Activated CD4-positive, alpha-beta memory T cell treated with anti-CD3 and anti-CD28 coated beads for 36 hours (primary cell): ENCODE measurements at regions of chrX and their contacts with region 1.

Region 1: DNA sequence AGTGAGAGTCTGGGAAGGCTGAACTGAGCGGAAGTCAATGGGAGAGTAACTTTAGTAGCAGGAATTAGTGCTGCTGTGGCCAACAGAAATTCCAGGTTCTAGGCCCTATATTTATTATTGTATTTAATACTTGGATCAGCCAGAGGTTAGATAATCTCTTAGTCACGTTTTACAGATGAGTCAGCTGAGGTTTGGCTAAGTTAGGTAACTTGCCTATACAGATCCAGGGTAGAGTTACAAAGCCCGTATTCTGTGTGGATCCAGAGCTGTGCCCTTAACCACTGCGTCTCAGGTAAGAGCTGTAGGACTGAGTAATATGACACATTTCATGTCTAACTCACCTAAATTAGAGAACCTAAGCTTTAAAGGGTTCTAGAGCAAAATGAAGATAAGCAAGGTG is 20.5 kb downstream of the PSMD10 start:
- DNase-seq: no peak
- H3K4me3 Mint-ChIP-seq: no peak overlapping the region
- H3K27ac Mint-ChIP-seq: no peak overlapping the region
- H3K4me1 Mint-ChIP-seq: peaks cover 3% of the 10 kb centered on the region
- H3K27me3 Mint-ChIP-seq: no peaks in the 10 kb centered on the region

Region 2: GRCh38 chrX:107537815-107538214 is 533.1 kb before region 1 on chrX:
- CTCF ChIA-PET with region 1: no interaction called
- POLR2A ChIA-PET with region 1: no interaction called
- intact Hi-C with region 1: no loop called
- DNase-seq: peak; percentile 50
- H3K4me3 Mint-ChIP-seq: no peak overlapping the region
- H3K27ac Mint-ChIP-seq: no peak overlapping the region
- H3K4me1 Mint-ChIP-seq: no peaks in the 10 kb centered on the region
- H3K27me3 Mint-ChIP-seq: peaks cover 8% of the 10 kb centered on the region

Region 3: GRCh38 chrX:107654872-107655761 is 415.8 kb before region 1 on chrX:
- CTCF ChIA-PET with region 1: interaction called, 3 read pairs
- POLR2A ChIA-PET with region 1: no interaction called
- intact Hi-C with region 1: loop called (anchors 5 kb)
- DNase-seq: peak; percentile 73
- H3K4me3 Mint-ChIP-seq: no peak overlapping the region
- H3K27ac Mint-ChIP-seq: no peak overlapping the region
- H3K4me1 Mint-ChIP-seq: peaks cover 13% of the 10 kb centered on the region
- H3K27me3 Mint-ChIP-seq: no peaks in the 10 kb centered on the region

Region 4: DNA sequence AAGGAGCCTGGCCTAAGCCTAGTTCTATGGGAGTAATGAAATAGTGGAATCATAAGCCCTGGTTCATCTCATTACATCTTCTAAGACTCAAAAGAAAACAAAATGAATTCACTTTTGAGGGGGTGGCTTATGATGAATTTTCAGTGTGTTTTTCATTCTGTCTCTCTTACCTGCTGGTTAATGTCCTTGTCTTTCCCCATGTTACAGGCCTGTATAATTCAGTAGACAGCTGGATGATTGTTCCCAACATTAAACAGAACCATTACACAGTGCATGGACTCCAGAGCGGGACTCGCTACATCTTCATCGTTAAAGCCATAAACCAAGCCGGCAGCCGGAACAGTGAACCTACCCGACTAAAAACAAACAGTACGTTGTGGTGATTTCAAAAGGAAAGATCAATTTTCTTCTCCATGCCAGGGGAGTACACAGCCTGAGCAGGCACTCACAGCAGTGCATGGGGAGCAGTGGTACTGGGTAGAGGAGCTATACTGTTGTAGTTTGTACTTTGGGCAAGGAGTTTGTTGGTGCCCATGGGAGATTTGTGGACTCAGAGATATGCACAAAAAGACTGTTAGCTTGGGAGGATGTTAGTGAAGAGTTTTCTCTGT is 146.7 kb before region 1 on chrX:
- CTCF ChIA-PET with region 1: no interaction called
- POLR2A ChIA-PET with region 1: no interaction called
- intact Hi-C with region 1: loop called (anchors 5 kb)
- DNase-seq: no peak
- H3K4me3 Mint-ChIP-seq: no peak overlapping the region
- H3K27ac Mint-ChIP-seq: no peak overlapping the region
- H3K4me1 Mint-ChIP-seq: no peaks in the 10 kb centered on the region
- H3K27me3 Mint-ChIP-seq: no peaks in the 10 kb centered on the region

Region 5: GRCh38 chrX:108053218-108053617 is 17.7 kb before region 1 on chrX:
- CTCF ChIA-PET with region 1: no interaction called
- POLR2A ChIA-PET with region 1: no interaction called
- intact Hi-C with region 1: loop called (anchors 2 kb)
- DNase-seq: no peak
- H3K4me3 Mint-ChIP-seq: no peak overlapping the region
- H3K27ac Mint-ChIP-seq: no peak overlapping the region
- H3K4me1 Mint-ChIP-seq: peaks cover 7% of the 10 kb centered on the region
- H3K27me3 Mint-ChIP-seq: no peaks in the 10 kb centered on the region

Region 6: GRCh38 chrX:108312938-108313337 is 242.0 kb after region 1 on chrX:
- CTCF ChIA-PET with region 1: no interaction called
- POLR2A ChIA-PET with region 1: no interaction called
- intact Hi-C with region 1: no loop called
- DNase-seq: no peak
- H3K4me3 Mint-ChIP-seq: no peak overlapping the region
- H3K27ac Mint-ChIP-seq: no peak overlapping the region
- H3K4me1 Mint-ChIP-seq: no peaks in the 10 kb centered on the region
- H3K27me3 Mint-ChIP-seq: peaks cover 2% of the 10 kb centered on the region